ENCODE measurements at regions of chr6 and their contacts with region 1.

Region 1: DNA sequence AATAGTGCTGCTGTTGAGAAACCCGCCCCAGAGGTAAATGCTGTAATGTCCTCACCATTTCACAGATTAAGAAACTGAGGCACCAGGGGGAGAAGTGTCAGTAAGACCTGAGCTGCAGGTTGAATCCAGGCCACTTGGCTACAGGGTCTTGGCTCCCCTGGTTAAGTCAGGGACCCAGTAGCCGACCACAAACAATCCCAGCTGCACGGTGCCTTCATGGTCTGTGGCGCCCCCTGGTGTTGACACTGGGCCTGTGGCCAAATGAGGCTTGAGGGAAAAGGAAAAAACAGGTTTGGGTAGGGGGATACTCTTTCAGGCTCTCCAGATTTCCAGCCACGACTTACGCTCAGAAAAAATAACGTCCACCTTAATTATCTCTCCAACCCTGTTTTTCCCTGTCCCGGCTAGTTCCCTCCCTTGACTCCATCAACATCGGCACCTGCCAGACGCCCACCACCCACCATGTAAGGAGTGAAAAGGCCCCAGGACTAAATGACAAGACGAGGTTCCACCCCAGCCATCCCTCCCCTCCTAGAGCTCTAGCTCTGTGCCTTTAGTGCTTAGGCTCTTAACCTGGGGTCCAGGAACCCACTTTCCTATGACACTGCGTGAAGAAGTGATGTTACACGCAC is 47.7 kb upstream of the POLR1H start:
- DNase-seq: no peak
- H3K4me3 ChIP-seq: no peak overlapping the region
- H3K27ac ChIP-seq: no peak overlapping the region
- H3K4me1 ChIP-seq: no peaks in the 10 kb centered on the region
- H3K27me3 ChIP-seq: no peaks in the 10 kb centered on the region
- CTCF ChIP-seq: peak; percentile 59 to 87

Region 2: DNA sequence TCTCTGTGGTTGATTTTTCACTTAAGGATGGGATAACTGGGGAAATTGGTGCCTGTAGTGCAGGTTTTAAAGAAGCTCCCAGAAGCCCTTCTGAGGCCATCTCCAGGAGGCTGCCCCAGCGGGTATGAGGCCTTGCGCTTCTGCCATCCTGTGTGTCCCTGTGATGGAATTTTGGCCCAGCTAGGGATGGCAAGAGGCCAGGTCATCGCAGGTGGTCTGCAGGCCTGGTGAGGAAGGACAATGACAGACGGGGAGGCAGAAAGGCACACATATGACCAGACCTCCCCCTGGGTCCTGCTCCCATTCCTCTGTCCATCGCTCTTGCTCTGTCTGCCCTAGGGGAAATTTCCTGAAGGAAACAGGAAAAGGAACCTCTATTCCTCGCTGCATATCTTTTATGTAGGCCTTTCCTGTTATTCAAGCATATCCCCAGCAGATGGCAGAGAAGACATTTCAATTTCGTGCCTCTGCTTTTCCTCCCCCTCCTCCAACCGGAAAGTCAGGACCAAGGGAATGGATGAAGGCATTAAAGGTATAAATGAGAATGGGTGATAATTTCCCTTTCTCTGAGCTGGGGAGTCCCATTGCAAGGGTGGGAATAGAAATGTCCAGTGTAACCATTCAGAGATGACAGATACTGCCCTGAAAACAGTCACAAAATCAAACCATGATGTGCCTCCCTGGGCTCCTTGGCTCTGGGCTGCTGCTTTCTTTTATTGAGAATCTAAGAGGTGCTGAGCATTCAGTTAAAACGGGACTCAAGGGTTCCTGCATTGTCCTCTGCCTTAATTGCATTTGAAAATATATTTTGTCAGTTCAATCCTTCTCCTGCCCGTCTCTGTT is 307.8 kb before region 1 on chr6:
- CTCF ChIA-PET with region 1: no interaction called
- dilution Hi-C with region 1: no loop called
- in situ Hi-C with region 1: no loop called
- intact Hi-C with region 1: loop called (anchors 1 kb)
- DNase-seq: peak; percentile 32
- H3K4me3 ChIP-seq: no peak overlapping the region
- H3K27ac ChIP-seq: no peak overlapping the region
- H3K4me1 ChIP-seq: no peaks in the 10 kb centered on the region
- H3K27me3 ChIP-seq: no peaks in the 10 kb centered on the region
- CTCF ChIP-seq: peak; percentile 41 to 53

Region 3: DNA sequence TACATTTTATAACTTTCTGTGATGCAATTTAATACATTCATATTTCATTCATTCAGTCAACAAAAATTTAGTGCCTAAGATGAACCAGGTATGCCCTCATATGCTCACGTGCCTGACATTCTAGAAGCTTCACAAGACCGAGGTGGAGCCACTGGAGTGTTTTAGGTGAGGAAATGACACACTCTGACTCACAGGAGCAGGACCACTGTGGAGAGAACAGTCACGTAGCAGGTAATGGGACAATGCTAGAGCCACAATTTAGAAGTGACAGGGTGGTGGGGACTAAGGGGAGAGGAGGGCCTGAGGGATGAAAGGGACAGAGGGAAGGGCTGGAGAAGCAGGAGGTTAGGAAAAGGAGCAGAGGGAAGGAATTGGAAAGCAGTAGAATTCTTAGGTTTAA is 88.7 kb before region 1 on chr6:
- CTCF ChIA-PET with region 1: no interaction called
- dilution Hi-C with region 1: loop called (anchors 5 kb)
- in situ Hi-C with region 1: no loop called
- intact Hi-C with region 1: no loop called
- DNase-seq: peak; percentile 69
- H3K4me3 ChIP-seq: no peak overlapping the region
- H3K27ac ChIP-seq: peak overlapping the region; percentile 85
- H3K4me1 ChIP-seq: peaks cover 31% of the 10 kb centered on the region
- H3K27me3 ChIP-seq: no peaks in the 10 kb centered on the region
- CTCF ChIP-seq: no peak

Region 4: GRCh38 chr6:29976588-29977424 is 36.6 kb before region 1 on chr6:
- CTCF ChIA-PET with region 1: no interaction called
- dilution Hi-C with region 1: no loop called
- in situ Hi-C with region 1: no loop called
- intact Hi-C with region 1: loop called (anchors 1 kb)
- DNase-seq: peak; percentile 70
- H3K4me3 ChIP-seq: peak overlapping the region; percentile 42 to 48 (median 47)
- H3K27ac ChIP-seq: peak overlapping the region; percentile 32
- H3K4me1 ChIP-seq: peaks cover 4% of the 10 kb centered on the region
- H3K27me3 ChIP-seq: peaks cover 3% of the 10 kb centered on the region
- CTCF ChIP-seq: peak in 1 of 2 donors; percentile 60